Endothelial cell of umbilical vein (primary cell): ENCODE measurements at regions of chr19 and their contacts with region 1.

Region 1: GRCh38 chr19:55339048-55339888 is at the start of gene KMT5C:
- DNase-seq: peak; percentile 100
- H3K4me3 ChIP-seq: peak within 1 kb of the TSS; percentile 38 to 69 (median 65)
- H3K27ac ChIP-seq: peak within 1 kb of the TSS; percentile 92
- H3K4me1 ChIP-seq: peaks cover 10% of the 10 kb centered on the region
- H3K27me3 ChIP-seq: peaks cover 0 to 3% of the 10 kb centered on the region in 2 experiments
- CTCF ChIP-seq: peak; percentile 15 to 34
- POLR2A ChIP-seq: no peak
- total RNA-seq, gene KMT5C: 11.4 and 13.5 TPM in 2 replicates

Region 2: DNA sequence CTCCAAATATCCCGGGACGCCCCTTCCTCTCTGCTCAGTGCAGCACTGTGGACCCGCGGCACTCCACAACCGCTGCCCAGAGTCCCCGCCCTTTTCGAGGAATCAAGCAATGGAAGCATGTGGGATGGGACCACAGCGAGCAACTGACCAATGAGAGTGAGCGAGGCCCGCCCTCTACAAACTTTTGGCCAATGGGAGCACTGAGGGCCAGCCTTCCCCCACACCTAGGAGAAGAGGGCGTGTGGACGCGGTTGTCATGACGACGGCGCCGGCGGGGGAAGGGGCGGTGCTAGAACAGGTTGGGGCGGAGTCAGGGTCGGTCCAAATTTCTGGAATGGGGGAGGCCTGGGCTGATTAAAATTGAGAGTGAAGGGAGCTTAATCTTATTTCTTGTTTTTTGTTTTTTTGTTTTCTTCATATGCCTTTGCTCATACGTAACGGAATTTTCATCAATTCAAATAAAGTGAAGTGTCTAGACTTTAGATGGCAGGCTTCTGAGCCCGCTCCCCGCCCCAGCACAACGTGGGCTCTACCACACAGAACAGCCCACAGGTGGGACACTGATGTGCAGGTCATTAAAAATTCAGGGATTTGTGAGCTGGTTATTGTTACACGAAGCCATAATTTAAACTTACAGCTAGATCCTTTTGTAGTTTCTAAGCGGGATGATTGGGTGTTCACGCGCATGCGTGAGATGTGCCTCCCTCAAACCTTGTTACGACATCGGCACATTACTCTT is 172.6 kb before region 1 on chr19 and contains the start of gene DNAAF3:
- CTCF ChIA-PET with region 1: no interaction called
- POLR2A ChIA-PET with region 1: no interaction called
- dilution Hi-C with region 1: no loop called
- intact Hi-C with region 1: loop called (anchors 1 kb)
- DNase-seq: peak; percentile 97
- H3K4me3 ChIP-seq: peak within 1 kb of the TSS in 2 of 3 experiments; percentile 25 to 52
- H3K27ac ChIP-seq: no peak within 1 kb of the TSS
- H3K4me1 ChIP-seq: no peaks in the 10 kb centered on the region
- H3K27me3 ChIP-seq: peaks cover 8 to 15% of the 10 kb centered on the region in 2 experiments
- CTCF ChIP-seq: no peak
- POLR2A ChIP-seq: no peak
- total RNA-seq, gene DNAAF3: 0.62 TPM in 1 of 2 replicates, not detected in the other

Region 3: DNA sequence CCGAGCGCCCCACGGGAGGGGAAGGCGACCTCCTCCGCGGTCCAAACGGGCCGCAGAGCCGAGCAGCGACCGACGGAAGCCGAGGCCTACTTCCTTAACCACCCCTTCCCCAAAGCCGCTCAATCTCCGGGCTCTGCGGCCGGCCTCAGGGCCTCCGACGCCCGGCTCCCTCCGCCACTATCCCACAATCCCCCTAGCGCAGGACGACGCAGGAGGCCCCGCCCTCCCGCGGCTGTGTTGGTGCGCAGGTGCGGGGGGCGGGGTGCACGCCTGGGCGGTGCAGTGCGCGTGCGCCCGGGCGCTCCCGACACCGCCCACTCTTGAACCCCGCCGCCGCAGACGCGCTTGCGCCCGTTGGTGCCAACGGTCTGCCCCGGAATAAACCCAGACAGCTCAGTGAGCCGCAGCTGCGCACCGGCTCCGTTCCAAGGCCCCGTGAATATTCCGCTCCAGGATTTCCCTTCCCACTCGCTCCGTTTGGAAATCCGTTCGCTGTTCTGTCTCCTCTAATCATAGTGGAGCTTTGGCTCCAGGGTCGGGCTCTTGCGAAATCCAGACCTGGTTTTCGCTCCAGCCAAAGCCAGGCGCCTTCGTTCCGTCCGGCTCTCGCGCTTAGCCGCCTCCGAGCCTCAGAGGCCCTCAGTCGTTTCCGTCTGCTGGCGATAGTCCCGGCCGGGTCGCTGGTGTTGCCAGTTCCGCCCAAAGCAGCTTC is 80.3 kb before region 1 on chr19 and contains the start of gene PPP6R1:
- CTCF ChIA-PET with region 1: no interaction called
- POLR2A ChIA-PET with region 1: interaction called, 4 read pairs
- dilution Hi-C with region 1: no loop called
- intact Hi-C with region 1: loop called (anchors 1 kb)
- DNase-seq: peak; percentile 100
- H3K4me3 ChIP-seq: peak within 1 kb of the TSS; percentile 73 to 88 (median 87)
- H3K27ac ChIP-seq: peak within 1 kb of the TSS; percentile 86
- H3K4me1 ChIP-seq: peaks cover 40% of the 10 kb centered on the region
- H3K27me3 ChIP-seq: no peaks in the 10 kb centered on the region
- CTCF ChIP-seq: no peak
- POLR2A ChIP-seq: peak; percentile 72
- total RNA-seq, gene PPP6R1: 68.3 and 71.8 TPM in 2 replicates

Region 4: DNA sequence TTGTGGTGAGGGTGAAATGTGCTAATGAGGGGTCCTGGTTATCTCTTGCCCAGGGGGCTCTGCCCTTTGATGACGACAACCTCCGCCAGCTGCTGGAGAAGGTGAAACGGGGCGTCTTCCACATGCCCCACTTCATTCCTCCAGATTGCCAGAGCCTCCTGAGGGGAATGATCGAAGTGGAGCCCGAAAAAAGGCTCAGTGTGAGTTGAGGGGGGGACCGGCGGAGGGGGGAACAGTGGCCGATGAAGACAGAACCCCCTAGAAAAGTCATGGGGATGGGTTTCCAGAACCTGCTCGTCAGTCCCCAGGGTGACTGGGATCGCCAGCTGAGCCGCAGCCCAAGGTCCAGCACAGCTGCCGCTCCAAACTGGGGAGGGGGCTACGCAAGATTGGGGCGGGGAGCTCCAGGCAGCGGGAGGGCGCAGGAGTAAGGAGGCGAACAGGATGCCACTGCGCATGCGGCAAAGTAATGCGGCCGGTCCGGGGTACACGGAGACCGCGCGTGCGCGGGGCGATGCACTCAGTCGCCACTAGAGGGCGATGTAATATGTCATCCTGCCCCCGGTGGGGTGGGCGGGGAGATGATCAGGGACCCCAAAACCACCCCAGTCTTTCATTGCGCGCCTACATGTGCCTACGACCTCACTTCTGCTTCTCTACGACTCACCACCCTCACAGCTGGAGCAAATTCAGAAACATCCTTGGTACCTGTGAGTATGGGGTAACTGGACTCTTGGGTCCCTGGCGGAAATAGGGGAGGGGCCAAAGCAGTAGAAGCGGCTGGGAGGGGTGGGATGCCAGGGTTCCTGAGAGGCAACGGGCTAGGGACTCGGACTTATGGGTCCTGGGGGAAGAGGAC is 37.6 kb before region 1 on chr19:
- CTCF ChIA-PET with region 1: interaction called, 29 read pairs
- POLR2A ChIA-PET with region 1: no interaction called
- dilution Hi-C with region 1: no loop called
- intact Hi-C with region 1: loop called (anchors 1 kb)
- DNase-seq: peak; percentile 81
- H3K4me3 ChIP-seq: peak overlapping the region in 2 of 3 experiments; percentile 26 to 28
- H3K27ac ChIP-seq: no peak overlapping the region
- H3K4me1 ChIP-seq: no peaks in the 10 kb centered on the region
- H3K27me3 ChIP-seq: peaks cover 0 to 3% of the 10 kb centered on the region in 2 experiments
- CTCF ChIP-seq: peak; percentile 89 to 95
- POLR2A ChIP-seq: no peak

Region 5: DNA sequence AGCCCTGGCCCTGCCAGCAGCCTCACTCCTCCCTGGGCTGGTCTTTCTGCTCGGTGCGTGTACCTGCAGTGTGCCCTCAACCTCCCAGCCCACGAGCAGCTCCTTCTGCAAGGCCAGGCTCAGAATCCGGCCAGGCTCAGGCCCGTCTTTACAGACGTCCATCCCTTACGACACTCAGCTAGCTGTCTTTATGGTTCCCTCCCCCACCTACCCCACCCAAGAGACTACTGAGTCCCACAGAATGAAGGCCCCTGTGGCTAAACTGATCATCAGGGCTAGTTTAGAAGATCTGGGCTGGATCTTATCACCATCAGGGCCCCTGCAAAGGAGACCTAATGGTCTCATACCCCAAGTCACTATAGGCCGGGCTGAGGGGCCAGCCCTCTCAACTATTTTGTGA is 24.9 kb before region 1 on chr19:
- CTCF ChIA-PET with region 1: no interaction called
- POLR2A ChIA-PET with region 1: no interaction called
- dilution Hi-C with region 1: no loop called
- intact Hi-C with region 1: no loop called
- DNase-seq: no peak
- H3K4me3 ChIP-seq: no peak overlapping the region
- H3K27ac ChIP-seq: no peak overlapping the region
- H3K4me1 ChIP-seq: no peaks in the 10 kb centered on the region
- H3K27me3 ChIP-seq: no peaks in the 10 kb centered on the region
- CTCF ChIP-seq: no peak
- POLR2A ChIP-seq: no peak

Region 6: GRCh38 chr19:55353803-55354697 is 14.8 kb after region 1 on chr19:
- CTCF ChIA-PET with region 1: interaction called, 4 read pairs
- POLR2A ChIA-PET with region 1: interaction called, 3 read pairs
- dilution Hi-C with region 1: no loop called
- intact Hi-C with region 1: loop called (anchors 1 kb)
- DNase-seq: peak; percentile 71
- H3K4me3 ChIP-seq: peak overlapping the region; percentile 8 to 26 (median 22)
- H3K27ac ChIP-seq: no peak overlapping the region
- H3K4me1 ChIP-seq: peaks cover 4% of the 10 kb centered on the region
- H3K27me3 ChIP-seq: peaks cover 26 to 31% of the 10 kb centered on the region in 2 experiments
- CTCF ChIP-seq: no peak
- POLR2A ChIP-seq: no peak

Region 7: DNA sequence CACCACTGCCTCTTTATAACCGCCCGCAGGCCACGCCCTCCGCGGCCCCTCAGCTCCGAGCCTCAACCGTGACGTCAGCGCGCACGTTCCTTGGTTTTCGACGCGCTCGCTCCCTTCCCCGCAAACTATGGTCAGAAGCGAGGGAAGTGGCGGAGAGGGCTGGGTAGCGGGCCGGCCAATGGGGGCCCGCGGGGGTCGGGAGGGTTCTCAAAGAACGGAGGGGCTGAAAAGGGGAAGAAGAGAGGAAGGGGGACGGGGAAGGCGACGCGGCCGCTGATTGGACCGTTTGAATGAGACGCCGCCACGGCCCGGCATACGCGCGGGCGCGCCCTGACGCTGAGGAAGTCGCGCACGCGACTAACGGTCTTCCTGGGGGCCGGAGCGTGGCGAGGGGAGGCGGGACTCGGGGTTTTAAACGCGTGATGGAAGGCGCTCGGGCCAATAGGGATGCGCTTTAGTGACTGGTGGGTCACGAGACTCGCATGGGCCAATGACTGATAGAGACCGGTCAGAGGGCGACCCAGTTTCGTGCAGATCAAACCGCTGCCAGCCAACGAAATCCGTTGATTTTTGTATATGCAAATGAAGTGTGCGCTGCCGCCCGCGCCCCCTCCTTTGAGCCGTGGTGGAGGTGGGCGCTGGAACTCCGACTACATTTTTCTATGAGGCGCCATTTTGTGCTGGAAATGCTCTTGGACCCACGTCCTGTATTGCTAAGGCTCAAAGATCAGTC is 68.7 kb after region 1 on chr19:
- CTCF ChIA-PET with region 1: interaction called, 3 read pairs
- POLR2A ChIA-PET with region 1: interaction called, 15 read pairs
- dilution Hi-C with region 1: no loop called
- intact Hi-C with region 1: loop called (anchors 1 kb)
- DNase-seq: peak; percentile 100
- H3K4me3 ChIP-seq: peak overlapping the region in 2 of 3 experiments; percentile 28 to 90
- H3K27ac ChIP-seq: peak overlapping the region; percentile 90
- H3K4me1 ChIP-seq: peaks cover 13% of the 10 kb centered on the region
- H3K27me3 ChIP-seq: peaks cover 2 to 5% of the 10 kb centered on the region in 2 experiments
- CTCF ChIP-seq: no peak
- POLR2A ChIP-seq: peak; percentile 58

Region 8: DNA sequence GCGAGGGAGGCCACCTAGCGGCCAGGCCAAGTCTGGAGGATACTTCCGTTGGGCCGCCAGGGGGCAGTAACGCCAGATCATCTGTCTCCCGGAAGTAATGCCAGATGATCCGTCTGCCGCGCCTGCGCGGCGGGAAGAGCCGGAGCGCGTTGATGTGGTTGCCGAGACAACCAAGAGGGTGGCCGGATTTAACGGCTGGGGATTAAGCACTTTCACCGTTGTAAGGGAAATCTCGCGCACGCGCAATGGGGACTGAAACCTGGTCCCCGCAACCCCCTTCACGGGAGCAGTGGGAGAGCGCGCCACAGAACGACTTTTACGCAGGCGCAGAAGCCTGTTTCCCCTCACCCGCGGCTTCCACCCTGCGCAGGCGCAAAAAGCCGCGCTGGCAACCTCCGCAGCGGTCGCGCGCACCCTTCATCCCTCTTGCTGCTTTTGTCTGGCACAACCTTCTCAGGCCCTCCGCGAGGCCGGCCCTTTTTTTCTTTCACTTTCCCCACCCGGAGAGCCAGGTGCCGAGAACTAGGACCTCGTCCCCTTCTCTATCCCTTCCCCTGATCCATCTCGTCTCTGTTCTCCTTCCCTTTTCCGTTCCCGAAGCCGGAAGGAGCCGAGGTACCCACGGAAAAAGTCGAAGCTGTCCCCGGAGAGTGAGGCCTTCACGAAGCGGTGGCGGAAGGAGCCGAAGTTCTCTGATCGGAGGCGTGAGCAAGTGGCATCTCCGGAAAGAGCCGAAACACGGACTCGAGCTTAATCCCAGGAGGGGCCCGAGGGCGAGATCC is 314.7 kb after region 1 on chr19:
- CTCF ChIA-PET with region 1: no interaction called
- POLR2A ChIA-PET with region 1: no interaction called
- dilution Hi-C with region 1: no loop called
- intact Hi-C with region 1: loop called (anchors 10 kb)
- DNase-seq: peak; percentile 99
- H3K4me3 ChIP-seq: peak overlapping the region; percentile 86 to 98 (median 89)
- H3K27ac ChIP-seq: peak overlapping the region; percentile 99
- H3K4me1 ChIP-seq: peaks cover 25% of the 10 kb centered on the region
- H3K27me3 ChIP-seq: no peaks in the 10 kb centered on the region
- CTCF ChIP-seq: peak; percentile 100
- POLR2A ChIP-seq: peak; percentile 79

Region 9: DNA sequence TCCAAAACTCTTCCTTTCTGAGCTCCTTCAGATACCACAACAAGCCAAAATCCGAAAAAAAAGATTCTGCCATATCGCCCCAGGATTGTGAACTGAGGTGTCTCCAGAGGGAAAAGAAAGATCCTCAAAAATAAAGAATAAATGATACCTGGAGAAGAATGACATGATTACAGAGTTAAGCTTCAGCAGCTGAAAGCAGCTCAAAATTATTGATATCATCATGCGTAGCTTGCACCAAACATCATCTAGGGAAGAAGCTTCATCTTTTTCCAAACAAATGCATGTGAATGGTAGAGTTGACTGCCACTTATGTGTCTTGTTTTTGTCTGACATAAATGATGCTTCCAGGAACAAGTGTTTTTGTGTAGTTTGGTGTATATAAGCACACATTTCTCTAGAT is 399.0 kb after region 1 on chr19 and contains the start of gene NLRP9:
- CTCF ChIA-PET with region 1: no interaction called
- POLR2A ChIA-PET with region 1: no interaction called
- dilution Hi-C with region 1: no loop called
- intact Hi-C with region 1: no loop called
- DNase-seq: no peak
- H3K4me3 ChIP-seq: no peak within 1 kb of the TSS
- H3K27ac ChIP-seq: no peak within 1 kb of the TSS
- H3K4me1 ChIP-seq: no peaks in the 10 kb centered on the region
- H3K27me3 ChIP-seq: no peaks in the 10 kb centered on the region
- CTCF ChIP-seq: no peak
- POLR2A ChIP-seq: no peak
- total RNA-seq, gene NLRP9: not detected in 2 replicates